Mammary epithelial cell (primary cell): ENCODE measurements at regions of chr1 and their contacts with region 1.

Region 1: GRCh38 chr1:176903474-176903873 is 261.0 kb downstream of the ASTN1 start:
- DNase-seq: peak; percentile 32
- H3K4me3 ChIP-seq: no peak overlapping the region
- H3K27ac ChIP-seq: no peak overlapping the region
- H3K4me1 ChIP-seq: no peaks in the 10 kb centered on the region
- H3K27me3 ChIP-seq: no peaks in the 10 kb centered on the region
- CTCF ChIP-seq: no peak

Region 2: DNA sequence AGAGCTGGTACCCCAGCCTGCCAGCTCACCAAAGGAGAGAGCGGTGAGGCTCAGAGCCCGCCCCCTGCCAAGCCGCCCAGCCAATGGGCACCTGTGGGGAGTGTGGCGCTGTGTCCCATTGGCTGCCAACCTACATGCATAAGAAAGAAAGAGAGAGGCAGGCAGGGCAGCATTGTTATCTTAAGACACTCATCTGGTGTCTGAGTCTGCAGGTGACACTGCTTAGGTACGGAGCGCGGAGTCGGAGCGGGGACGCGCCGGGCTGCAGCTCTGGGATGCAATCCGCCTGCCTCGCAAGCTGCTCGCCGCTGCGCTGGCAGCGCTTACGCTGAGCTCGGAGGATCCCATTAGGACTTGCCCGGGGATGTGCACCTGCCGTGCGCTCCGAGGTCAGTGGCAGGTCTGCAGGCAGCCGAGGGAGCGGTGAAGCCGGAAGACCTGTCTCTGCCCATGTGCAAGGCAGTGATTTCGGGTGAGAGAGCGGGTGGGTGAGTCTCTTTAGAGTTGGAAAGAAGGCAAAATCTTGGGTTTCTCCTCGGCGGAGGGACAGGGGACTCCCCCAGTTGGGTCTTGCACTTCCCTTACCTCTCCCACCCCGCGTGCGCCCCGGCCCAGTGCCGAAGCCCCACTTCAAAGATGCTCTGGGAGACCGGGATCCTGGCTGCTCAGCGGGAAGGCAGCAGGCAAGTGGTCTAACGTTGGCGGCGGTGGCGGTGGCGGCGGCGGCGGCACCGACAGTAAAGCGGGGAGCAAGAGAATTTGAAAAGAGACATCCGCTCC is 267.5 kb after region 1 on chr1 and contains the start of gene BRINP2:
- CTCF ChIA-PET with region 1: no interaction called
- dilution Hi-C with region 1: no loop called
- in situ Hi-C with region 1: loop called in 1 of 2 experiments (anchors 10 kb)
- intact Hi-C with region 1: no loop called
- DNase-seq: peak; percentile 67
- H3K4me3 ChIP-seq: peak within 1 kb of the TSS; percentile 6 to 40 (median 39)
- H3K27ac ChIP-seq: no peak within 1 kb of the TSS
- H3K4me1 ChIP-seq: peaks cover 9% of the 10 kb centered on the region
- H3K27me3 ChIP-seq: peaks cover 20% of the 10 kb centered on the region
- CTCF ChIP-seq: no peak
- total RNA-seq, gene BRINP2: not detected

Region 3: GRCh38 chr1:177333936-177334595 is 430.6 kb after region 1 on chr1:
- CTCF ChIA-PET with region 1: no interaction called
- dilution Hi-C with region 1: no loop called
- in situ Hi-C with region 1: loop called in 1 of 2 experiments (anchors 25 kb)
- intact Hi-C with region 1: no loop called
- DNase-seq: no peak
- H3K4me3 ChIP-seq: no peak overlapping the region
- H3K27ac ChIP-seq: no peak overlapping the region
- H3K4me1 ChIP-seq: no peaks in the 10 kb centered on the region
- H3K27me3 ChIP-seq: no peaks in the 10 kb centered on the region
- CTCF ChIP-seq: peak; percentile 38 to 42